ENCODE measurements at regions of chr5 and their contacts with region 1.

Region 1: GRCh38 chr5:40437452-40437861 is 242.3 kb upstream of the PTGER4 start:
- DNase-seq: no peak
- ATAC-seq: peak; percentile 80
- H3K4me3 Mint-ChIP-seq: peak overlapping the region; percentile 56
- H3K27ac Mint-ChIP-seq: peak overlapping the region; percentile 54
- H3K4me1 Mint-ChIP-seq: peaks cover 45% of the 10 kb centered on the region
- H3K27me3 Mint-ChIP-seq: no peaks in the 10 kb centered on the region
- CTCF ChIP-seq: no peak

Region 2: DNA sequence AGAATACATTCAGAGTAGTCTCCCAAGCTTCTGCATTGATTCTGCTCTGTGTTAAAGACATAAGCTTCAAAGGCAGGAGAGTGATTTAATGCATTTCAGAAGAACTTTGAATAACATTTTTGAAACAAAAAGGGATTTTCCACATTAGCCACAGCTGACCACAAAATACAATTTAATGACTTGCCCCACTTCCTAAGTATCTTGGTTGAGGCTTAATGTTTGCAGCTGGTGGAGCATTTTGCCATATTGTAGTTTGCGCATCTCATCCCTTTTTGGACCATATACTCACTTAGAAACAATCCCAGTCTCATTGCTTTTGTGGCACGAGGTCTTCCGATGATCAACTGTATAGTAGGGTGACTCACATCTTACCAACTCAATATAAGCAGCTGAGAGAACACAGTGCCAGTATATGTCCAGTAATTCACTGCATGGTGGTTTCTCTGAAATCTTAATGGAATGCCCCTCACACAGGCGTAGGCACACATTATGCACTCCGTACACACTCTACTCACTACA is 213.5 kb before region 1 on chr5:
- CTCF ChIA-PET with region 1: no interaction called
- POLR2A ChIA-PET with region 1: no interaction called
- intact Hi-C with region 1: loop called (anchors 2 kb)
- DNase-seq: no peak
- ATAC-seq: peak; percentile 63
- H3K4me3 Mint-ChIP-seq: peak overlapping the region; percentile 21
- H3K27ac Mint-ChIP-seq: peak overlapping the region; percentile 79
- H3K4me1 Mint-ChIP-seq: peaks cover 45% of the 10 kb centered on the region
- H3K27me3 Mint-ChIP-seq: peaks cover 5% of the 10 kb centered on the region
- CTCF ChIP-seq: no peak

Region 3: DNA sequence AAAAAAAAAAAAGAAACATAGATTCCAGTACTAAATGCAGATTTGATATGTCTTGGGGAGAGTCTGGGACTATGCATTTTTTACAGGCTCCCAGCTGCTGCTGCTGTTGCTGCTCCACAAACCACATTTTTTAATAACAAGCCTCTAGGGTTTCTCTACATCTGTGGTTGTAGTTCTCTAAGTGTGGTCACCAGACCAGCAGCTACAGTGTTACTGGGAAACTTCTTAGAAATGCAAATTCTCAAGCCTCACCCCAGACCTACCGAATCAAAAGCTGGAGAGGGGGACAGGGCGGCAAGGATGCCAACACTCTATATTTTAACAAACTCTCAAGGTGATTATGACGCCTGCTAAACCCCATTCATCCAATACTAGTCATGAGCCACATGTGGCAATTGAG is 51.2 kb before region 1 on chr5:
- CTCF ChIA-PET with region 1: no interaction called
- POLR2A ChIA-PET with region 1: interaction called, 7 read pairs
- intact Hi-C with region 1: loop called (anchors 2 kb)
- DNase-seq: no peak
- ATAC-seq: peak; percentile 78
- H3K4me3 Mint-ChIP-seq: peak overlapping the region; percentile 25
- H3K27ac Mint-ChIP-seq: peak overlapping the region; percentile 66
- H3K4me1 Mint-ChIP-seq: peaks cover 50% of the 10 kb centered on the region
- H3K27me3 Mint-ChIP-seq: no peaks in the 10 kb centered on the region
- CTCF ChIP-seq: no peak

Region 4: GRCh38 chr5:40410231-40410861 is 27.1 kb before region 1 on chr5:
- CTCF ChIA-PET with region 1: no interaction called
- POLR2A ChIA-PET with region 1: interaction called, 7 read pairs
- intact Hi-C with region 1: loop called (anchors 2 kb)
- DNase-seq: no peak
- ATAC-seq: peak; percentile 69
- H3K4me3 Mint-ChIP-seq: peak overlapping the region; percentile 51
- H3K27ac Mint-ChIP-seq: peak overlapping the region; percentile 78
- H3K4me1 Mint-ChIP-seq: peaks cover 44% of the 10 kb centered on the region
- H3K27me3 Mint-ChIP-seq: no peaks in the 10 kb centered on the region
- CTCF ChIP-seq: no peak

Region 5: GRCh38 chr5:40502736-40503135 is 65.3 kb after region 1 on chr5:
- CTCF ChIA-PET with region 1: no interaction called
- POLR2A ChIA-PET with region 1: no interaction called
- intact Hi-C with region 1: loop called (anchors 1 kb)
- DNase-seq: no peak
- ATAC-seq: peak; percentile 84
- H3K4me3 Mint-ChIP-seq: no peak overlapping the region
- H3K27ac Mint-ChIP-seq: no peak overlapping the region
- H3K4me1 Mint-ChIP-seq: peaks cover 9% of the 10 kb centered on the region
- H3K27me3 Mint-ChIP-seq: no peaks in the 10 kb centered on the region
- CTCF ChIP-seq: no peak

Region 6: GRCh38 chr5:41856644-41857491 is 1419.4 kb after region 1 on chr5:
- CTCF ChIA-PET with region 1: no interaction called
- POLR2A ChIA-PET with region 1: no interaction called
- intact Hi-C with region 1: no loop called
- DNase-seq: peak; percentile 14
- ATAC-seq: peak; percentile 78
- H3K4me3 Mint-ChIP-seq: no peak overlapping the region
- H3K27ac Mint-ChIP-seq: no peak overlapping the region
- H3K4me1 Mint-ChIP-seq: no peaks in the 10 kb centered on the region
- H3K27me3 Mint-ChIP-seq: no peaks in the 10 kb centered on the region
- CTCF ChIP-seq: no peak

Measured in activated B cell treated with CpG ODN at 0.5 μM for 24 hours (primary cell).